IMR-90 (cell line): ENCODE measurements at regions of chr15 and their contacts with region 1.

Region 1: DNA sequence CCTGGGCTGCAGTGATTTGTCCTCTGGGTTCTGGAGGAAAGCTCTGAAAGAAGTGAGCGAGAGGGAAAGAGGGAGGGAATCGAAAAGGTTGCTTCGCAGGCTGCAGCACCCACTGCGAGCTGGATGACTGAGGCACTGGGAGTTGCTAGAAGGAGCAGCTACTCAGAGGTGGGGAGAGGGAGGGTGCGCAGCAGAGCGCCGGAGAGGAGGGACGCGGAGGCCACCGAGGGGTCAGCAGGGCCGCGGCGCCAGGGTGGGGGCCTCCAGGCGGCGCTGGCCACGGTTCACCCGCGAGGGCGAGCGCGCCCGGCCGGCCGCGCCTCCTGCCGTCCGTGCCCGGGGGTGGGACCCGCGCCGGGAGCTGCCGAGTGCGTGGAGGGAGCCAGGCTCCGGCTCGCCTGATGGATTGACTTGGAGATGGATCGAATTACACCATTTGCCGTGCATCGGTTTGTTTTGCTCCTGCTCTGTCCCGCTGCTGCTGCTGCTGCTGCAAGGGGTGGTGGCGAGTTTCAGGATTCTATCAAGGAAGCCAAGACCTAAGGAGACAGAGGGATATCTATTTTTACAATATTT is at the start of gene SEMA6D:
- DNase-seq: peak; percentile 85
- ATAC-seq: peak; percentile 75
- H3K4me3 ChIP-seq: peak within 1 kb of the TSS; percentile 95
- H3K27ac ChIP-seq: peak within 1 kb of the TSS; percentile 84
- H3K4me1 ChIP-seq: peaks cover 4% of the 10 kb centered on the region
- H3K27me3 ChIP-seq: no peaks in the 10 kb centered on the region
- CTCF ChIP-seq: peak; percentile 51
- POLR2A ChIP-seq: no peak
- RAD21 ChIP-seq: peak; percentile 48
- total RNA-seq, gene SEMA6D: 17.4 and 18.3 TPM in 2 replicates

Region 2: DNA sequence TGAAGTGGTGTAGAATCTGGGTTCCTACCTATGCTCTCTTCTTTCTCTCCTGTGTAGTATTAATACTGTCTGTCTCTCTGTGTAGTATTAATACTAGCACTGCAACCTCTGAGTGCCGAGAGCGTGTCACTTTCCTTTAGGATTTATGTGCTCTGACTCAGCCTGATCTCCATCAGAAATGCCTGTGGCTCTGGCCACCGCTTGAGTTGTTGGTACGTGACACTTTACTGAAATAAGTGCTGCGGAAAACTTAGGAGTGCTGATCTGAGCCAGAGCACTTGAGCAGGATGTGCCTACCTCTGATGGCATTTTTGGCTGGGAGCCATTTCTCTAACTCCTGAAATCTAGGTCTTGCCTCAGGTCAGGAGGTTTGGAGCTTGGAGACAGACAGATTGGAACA is 1274.9 kb before region 1 on chr15:
- CTCF ChIA-PET with region 1: no interaction called
- POLR2A ChIA-PET with region 1: no interaction called
- dilution Hi-C with region 1: no loop called
- in situ Hi-C with region 1: no loop called
- intact Hi-C with region 1: no loop called
- DNase-seq: no peak
- ATAC-seq: no peak
- H3K4me3 ChIP-seq: no peak overlapping the region
- H3K27ac ChIP-seq: no peak overlapping the region
- H3K4me1 ChIP-seq: no peaks in the 10 kb centered on the region
- H3K27me3 ChIP-seq: no peaks in the 10 kb centered on the region
- CTCF ChIP-seq: no peak
- POLR2A ChIP-seq: no peak
- RAD21 ChIP-seq: no peak

Region 3: DNA sequence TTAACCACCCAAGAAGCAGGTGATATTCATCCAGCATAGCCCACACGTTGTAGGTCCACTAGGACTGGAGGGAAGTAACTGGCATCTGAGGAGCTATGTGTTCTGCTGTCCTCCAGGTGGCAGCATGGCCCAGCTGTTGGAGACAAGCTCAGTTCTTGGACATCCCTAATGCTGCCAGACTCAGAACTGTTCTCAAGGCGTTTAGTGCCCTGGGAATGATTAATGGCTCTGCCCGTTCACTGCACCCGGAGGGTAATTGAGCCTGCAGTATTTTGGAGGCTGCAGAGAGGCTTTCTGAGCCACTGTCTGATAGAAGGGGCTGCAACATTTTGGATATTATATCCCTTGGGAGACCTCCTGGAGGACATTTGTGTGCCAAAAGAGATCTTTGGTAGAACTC is 521.1 kb before region 1 on chr15:
- CTCF ChIA-PET with region 1: interaction called, 8 read pairs
- POLR2A ChIA-PET with region 1: interaction called, 3 read pairs
- dilution Hi-C with region 1: no loop called
- in situ Hi-C with region 1: no loop called
- intact Hi-C with region 1: loop called (anchors 1 kb)
- DNase-seq: peak; percentile 87
- ATAC-seq: peak; percentile 100
- H3K4me3 ChIP-seq: no peak overlapping the region
- H3K27ac ChIP-seq: no peak overlapping the region
- H3K4me1 ChIP-seq: no peaks in the 10 kb centered on the region
- H3K27me3 ChIP-seq: peaks cover 2% of the 10 kb centered on the region
- CTCF ChIP-seq: peak; percentile 91
- POLR2A ChIP-seq: peak; percentile 47; the same call in 1 of the 2 replicates
- RAD21 ChIP-seq: peak; percentile 100

Region 4: DNA sequence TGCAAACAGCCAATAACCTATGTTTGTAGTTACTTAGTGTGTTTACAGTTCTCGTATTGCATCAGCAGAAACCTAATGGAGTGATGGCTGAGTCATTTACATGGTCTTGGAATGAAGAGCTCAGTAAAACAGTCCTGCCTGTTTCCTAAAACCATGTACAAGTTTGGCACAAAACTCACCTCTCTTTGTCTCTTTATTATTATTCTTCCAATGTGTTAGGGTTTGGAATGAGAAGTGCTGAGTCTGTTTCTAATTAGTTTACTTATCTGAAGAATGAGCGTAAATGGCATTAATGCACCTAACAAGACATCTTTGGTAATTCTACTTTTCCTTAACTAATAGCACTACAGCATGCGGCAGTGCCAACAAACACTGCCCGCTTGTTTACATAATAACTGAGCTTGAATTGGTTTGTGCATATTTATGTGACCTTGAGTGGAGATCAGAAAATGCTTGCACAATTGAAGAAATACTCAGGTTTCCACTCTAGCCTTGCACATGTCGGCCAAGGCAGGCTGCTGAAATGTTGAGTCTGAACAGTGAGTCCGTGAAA is 385.2 kb before region 1 on chr15:
- CTCF ChIA-PET with region 1: no interaction called
- POLR2A ChIA-PET with region 1: no interaction called
- dilution Hi-C with region 1: no loop called
- in situ Hi-C with region 1: no loop called
- intact Hi-C with region 1: loop called (anchors 5 kb)
- DNase-seq: peak; percentile 83
- ATAC-seq: peak; percentile 81
- H3K4me3 ChIP-seq: no peak overlapping the region
- H3K27ac ChIP-seq: peak overlapping the region; percentile 80; the same call in 1 of the 2 replicates
- H3K4me1 ChIP-seq: peaks cover 5% of the 10 kb centered on the region
- H3K27me3 ChIP-seq: no peaks in the 10 kb centered on the region
- CTCF ChIP-seq: no peak
- POLR2A ChIP-seq: no peak
- RAD21 ChIP-seq: no peak

Region 5: DNA sequence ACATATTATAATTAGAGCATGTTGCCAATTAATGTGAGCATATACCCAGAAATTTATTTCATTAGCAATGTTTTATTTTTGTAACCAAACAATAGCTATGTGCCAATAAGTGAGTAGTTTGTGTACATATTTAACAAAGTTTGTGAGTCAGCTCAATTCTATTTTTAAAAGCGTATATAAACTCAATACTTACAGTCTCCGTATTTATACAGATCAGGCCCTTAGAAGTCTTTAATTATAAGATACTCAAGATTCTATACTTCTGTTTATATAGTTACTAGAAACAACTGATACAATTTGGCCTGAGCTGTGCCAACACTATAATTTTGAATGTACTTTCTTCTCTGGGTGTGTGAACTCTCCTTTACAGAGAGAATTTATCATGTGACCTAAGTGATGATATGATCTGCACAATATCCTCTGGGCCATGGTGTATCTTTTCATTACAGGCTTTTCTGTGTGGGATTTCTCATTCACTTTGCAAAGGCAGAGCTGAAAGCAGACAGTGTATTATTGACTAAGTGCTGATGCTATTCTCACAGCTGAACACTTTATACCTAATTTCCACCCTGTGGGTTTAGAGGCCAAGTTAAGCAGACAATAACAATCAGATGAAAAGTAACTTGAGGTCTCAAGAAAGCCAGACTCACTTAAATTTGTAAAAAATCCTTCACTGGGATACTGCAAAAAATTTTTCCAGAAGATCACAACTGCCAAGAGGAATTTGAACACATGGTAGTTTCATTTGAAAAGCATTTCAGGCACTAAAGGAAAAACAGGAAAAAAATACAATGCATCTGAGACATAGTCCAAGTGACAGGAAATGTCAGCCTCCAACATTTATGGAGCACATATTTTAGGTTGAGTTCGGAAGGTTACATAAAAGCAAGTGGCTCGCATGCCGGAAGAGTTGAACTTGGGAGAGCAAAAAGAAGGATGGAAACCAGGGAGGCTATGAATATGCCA is 277.7 kb before region 1 on chr15:
- CTCF ChIA-PET with region 1: no interaction called
- POLR2A ChIA-PET with region 1: no interaction called
- dilution Hi-C with region 1: no loop called
- in situ Hi-C with region 1: no loop called
- intact Hi-C with region 1: loop called (anchors 5 kb)
- DNase-seq: peak; percentile 65
- ATAC-seq: peak; percentile 38
- H3K4me3 ChIP-seq: no peak overlapping the region
- H3K27ac ChIP-seq: peak overlapping the region; percentile 48
- H3K4me1 ChIP-seq: peaks cover 21% of the 10 kb centered on the region
- H3K27me3 ChIP-seq: no peaks in the 10 kb centered on the region
- CTCF ChIP-seq: no peak
- POLR2A ChIP-seq: no peak
- RAD21 ChIP-seq: no peak

Region 6: GRCh38 chr15:47577000-47577399 is 140.1 kb before region 1 on chr15:
- CTCF ChIA-PET with region 1: no interaction called
- POLR2A ChIA-PET with region 1: no interaction called
- dilution Hi-C with region 1: no loop called
- in situ Hi-C with region 1: no loop called
- intact Hi-C with region 1: loop called (anchors 10 kb)
- DNase-seq: peak; percentile 10
- ATAC-seq: no peak; the same call in 1 of the 2 replicates
- H3K4me3 ChIP-seq: no peak overlapping the region
- H3K27ac ChIP-seq: no peak overlapping the region
- H3K4me1 ChIP-seq: peaks cover 2% of the 10 kb centered on the region; the same call in 1 of the 2 replicates
- H3K27me3 ChIP-seq: no peaks in the 10 kb centered on the region
- CTCF ChIP-seq: no peak
- POLR2A ChIP-seq: no peak
- RAD21 ChIP-seq: no peak

Region 7: DNA sequence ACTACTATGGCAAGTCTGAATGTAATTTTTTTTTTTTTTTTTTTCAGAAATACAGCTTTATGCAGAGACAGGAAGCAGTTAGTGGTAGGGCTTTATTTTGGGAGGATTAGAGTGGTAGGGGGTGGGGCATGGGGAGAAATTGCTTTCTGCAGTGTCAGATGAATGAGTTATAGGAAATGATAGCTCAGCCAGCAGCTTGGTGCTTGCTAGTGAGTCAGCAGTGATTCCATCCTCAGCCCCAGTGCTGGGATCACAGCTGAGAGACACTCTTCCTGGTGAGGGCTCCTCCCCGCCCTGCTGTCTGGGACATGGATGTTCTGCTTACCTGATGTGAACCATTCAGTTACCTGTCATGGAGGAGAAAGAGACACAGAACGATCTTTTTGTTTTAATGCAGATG is 39.7 kb after region 1 on chr15:
- CTCF ChIA-PET with region 1: no interaction called
- POLR2A ChIA-PET with region 1: interaction called, 16 read pairs
- dilution Hi-C with region 1: no loop called
- in situ Hi-C with region 1: no loop called
- intact Hi-C with region 1: loop called (anchors 2 kb)
- DNase-seq: peak; percentile 91
- ATAC-seq: peak; percentile 99
- H3K4me3 ChIP-seq: no peak overlapping the region
- H3K27ac ChIP-seq: no peak overlapping the region
- H3K4me1 ChIP-seq: peaks cover 2% of the 10 kb centered on the region
- H3K27me3 ChIP-seq: no peaks in the 10 kb centered on the region
- CTCF ChIP-seq: no peak
- POLR2A ChIP-seq: no peak
- RAD21 ChIP-seq: 0 out of 2 replicates have a peak, but pooled peaks have one; percentile 4

Region 8: DNA sequence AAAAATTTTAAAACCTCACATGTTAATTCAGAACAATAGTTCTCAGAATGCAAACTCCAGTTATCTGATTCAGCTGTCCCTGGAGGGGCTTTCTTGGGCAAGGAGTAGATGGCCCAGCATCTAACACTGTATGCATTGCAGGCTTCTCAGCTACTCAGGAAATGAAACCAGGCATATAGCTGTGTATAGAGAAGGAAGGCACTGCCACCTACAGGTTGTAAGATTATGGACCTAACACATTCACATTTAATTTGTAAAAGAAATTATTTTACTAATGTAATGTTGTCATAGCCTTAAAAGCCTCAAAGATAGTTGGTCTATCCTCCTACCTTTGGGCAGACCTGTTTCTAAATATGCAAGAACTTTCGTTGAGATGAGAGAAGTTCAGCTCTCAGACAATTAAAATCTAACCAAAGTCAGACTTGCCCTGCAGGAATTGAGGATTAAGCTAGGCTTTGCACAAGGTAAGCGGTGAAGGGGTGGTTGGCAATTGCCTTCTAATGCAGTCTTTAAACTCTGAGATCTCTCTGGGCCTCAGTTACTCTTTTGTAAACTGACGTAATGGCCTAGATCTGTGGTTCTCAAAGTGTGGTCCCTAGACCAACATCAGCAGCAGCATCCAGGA is 270.9 kb after region 1 on chr15:
- CTCF ChIA-PET with region 1: interaction called, 4 read pairs
- POLR2A ChIA-PET with region 1: no interaction called
- dilution Hi-C with region 1: no loop called
- in situ Hi-C with region 1: no loop called
- intact Hi-C with region 1: loop called (anchors 2 kb)
- DNase-seq: peak; percentile 70
- ATAC-seq: peak; percentile 99
- H3K4me3 ChIP-seq: no peak overlapping the region
- H3K27ac ChIP-seq: no peak overlapping the region
- H3K4me1 ChIP-seq: no peaks in the 10 kb centered on the region
- H3K27me3 ChIP-seq: no peaks in the 10 kb centered on the region; the same call in 1 of the 2 replicates
- CTCF ChIP-seq: peak; percentile 88
- POLR2A ChIP-seq: no peak
- RAD21 ChIP-seq: peak; percentile 90